SK-N-SH (cell line): ENCODE measurements at regions of chrX and their contacts with region 1.

Region 1: GRCh38 chrX:118614150-118614549 is 113.3 kb upstream of the IL13RA1 start:
- DNase-seq: no peak
- H3K4me3 ChIP-seq: no peak overlapping the region
- H3K27ac ChIP-seq: no peak overlapping the region
- H3K4me1 ChIP-seq: no peaks in the 10 kb centered on the region
- H3K27me3 ChIP-seq: no peaks in the 10 kb centered on the region
- CTCF ChIP-seq: no peak
- EP300 ChIP-seq: no peak
- RAD21 ChIP-seq: no peak

Region 2: DNA sequence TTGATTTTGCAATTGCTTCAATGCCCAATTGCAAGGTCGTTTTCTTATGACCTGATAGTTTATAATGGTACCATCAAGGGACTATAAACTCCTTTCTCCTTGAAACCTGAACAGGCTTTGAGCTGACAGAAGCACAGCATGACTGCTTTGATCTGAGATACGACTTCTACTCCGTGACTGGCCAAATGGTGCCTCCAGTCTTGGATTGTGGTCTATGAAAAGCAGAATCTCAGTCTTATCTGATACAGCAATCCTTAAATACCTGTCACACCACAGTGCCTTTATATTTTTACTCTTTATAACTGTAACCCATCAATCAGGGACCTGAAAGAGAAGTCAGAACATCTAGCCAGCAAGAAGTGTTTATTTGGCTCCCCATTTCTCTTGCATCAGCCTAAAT is 25.4 kb before region 1 on chrX:
- CTCF ChIA-PET with region 1: no interaction called
- POLR2A ChIA-PET with region 1: no interaction called
- DNase-seq: no peak
- H3K4me3 ChIP-seq: no peak overlapping the region
- H3K27ac ChIP-seq: no peak overlapping the region
- H3K4me1 ChIP-seq: no peaks in the 10 kb centered on the region
- H3K27me3 ChIP-seq: no peaks in the 10 kb centered on the region
- CTCF ChIP-seq: no peak
- EP300 ChIP-seq: no peak
- RAD21 ChIP-seq: no peak

Region 3: GRCh38 chrX:118627084-118627758 is 13.1 kb after region 1 on chrX:
- CTCF ChIA-PET with region 1: interaction called, 10 read pairs
- POLR2A ChIA-PET with region 1: no interaction called
- DNase-seq: peak; percentile 18
- H3K4me3 ChIP-seq: no peak overlapping the region
- H3K27ac ChIP-seq: no peak overlapping the region
- H3K4me1 ChIP-seq: no peaks in the 10 kb centered on the region
- H3K27me3 ChIP-seq: no peaks in the 10 kb centered on the region
- CTCF ChIP-seq: peak; percentile 49
- EP300 ChIP-seq: no peak
- RAD21 ChIP-seq: peak; percentile 54